ENCODE measurements at regions of chr3 and their contacts with region 1.

Region 1: DNA sequence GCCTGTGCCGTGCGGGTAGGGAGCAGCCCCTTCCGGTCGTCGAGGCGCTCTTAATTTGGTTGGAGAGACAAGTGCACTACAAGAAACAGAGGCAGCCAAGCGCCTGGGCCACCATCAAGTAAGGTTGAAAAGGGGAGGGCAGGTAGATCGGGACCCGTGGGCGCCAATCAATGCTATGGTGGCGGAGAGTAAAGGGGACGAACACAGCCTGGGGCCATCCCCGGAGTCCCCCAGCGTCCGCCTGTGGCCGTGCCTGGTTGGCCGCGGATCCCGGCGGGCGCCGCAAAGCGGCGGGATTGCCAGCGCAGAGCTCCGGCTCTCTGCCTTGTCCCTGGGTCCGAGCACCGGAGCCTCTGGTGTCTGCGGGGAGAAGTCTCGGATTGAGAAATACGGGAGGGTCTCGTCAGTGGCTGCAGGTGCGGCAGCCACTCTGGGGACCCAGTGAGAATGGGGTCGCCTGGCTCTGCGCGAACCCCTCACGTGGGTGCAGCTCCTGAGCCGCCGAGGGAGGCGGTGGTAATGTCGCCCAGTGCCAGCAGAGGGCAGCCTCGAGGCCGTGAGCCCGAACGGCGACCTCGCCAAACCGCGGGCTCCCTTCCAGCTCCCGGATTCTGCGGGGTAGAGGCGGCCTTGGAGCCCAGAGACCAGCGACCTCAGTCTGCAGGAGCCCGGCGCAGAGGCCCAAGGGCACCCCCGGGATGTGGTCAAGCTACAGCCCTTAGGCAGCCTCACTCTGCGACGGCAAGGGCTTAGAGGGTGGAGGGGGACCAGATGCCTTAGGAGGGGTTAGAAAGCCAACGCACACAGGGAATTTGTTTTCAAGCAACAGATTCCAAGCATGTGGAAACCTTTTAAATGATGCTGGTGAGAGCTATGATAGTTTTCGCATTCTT is 10.8 kb downstream of the FOXL2 start:
- DNase-seq: peak; percentile 71 to 83
- ATAC-seq: peak; percentile 69 to 85 (median 78)
- H3K4me3 ChIP-seq: peak overlapping the region in 9 of 10 donors; percentile 12 to 44 (median 41)
- H3K27ac ChIP-seq: no peak overlapping the region
- H3K4me1 ChIP-seq: peaks cover 17 to 47% (median 44%) of the 10 kb centered on the region in 9 donors
- H3K27me3 ChIP-seq: peaks cover 38 to 71% (median 60%) of the 10 kb centered on the region in 7 donors
- CTCF ChIP-seq: peak; percentile 86 to 98 (median 95)

Region 2: GRCh38 chr3:138974462-138974861 is 38.4 kb after region 1 on chr3:
- intact Hi-C with region 1: loop called in 1 of 10 experiments (anchors 2 kb)
- DNase-seq: no peak
- ATAC-seq: no peak
- H3K4me3 ChIP-seq: no peak overlapping the region
- H3K27ac ChIP-seq: no peak overlapping the region
- H3K4me1 ChIP-seq: no peaks in the 10 kb centered on the region
- H3K27me3 ChIP-seq: peaks cover 0 to 27% (median 16%) of the 10 kb centered on the region in 7 donors
- CTCF ChIP-seq: no peak

Region 3: DNA sequence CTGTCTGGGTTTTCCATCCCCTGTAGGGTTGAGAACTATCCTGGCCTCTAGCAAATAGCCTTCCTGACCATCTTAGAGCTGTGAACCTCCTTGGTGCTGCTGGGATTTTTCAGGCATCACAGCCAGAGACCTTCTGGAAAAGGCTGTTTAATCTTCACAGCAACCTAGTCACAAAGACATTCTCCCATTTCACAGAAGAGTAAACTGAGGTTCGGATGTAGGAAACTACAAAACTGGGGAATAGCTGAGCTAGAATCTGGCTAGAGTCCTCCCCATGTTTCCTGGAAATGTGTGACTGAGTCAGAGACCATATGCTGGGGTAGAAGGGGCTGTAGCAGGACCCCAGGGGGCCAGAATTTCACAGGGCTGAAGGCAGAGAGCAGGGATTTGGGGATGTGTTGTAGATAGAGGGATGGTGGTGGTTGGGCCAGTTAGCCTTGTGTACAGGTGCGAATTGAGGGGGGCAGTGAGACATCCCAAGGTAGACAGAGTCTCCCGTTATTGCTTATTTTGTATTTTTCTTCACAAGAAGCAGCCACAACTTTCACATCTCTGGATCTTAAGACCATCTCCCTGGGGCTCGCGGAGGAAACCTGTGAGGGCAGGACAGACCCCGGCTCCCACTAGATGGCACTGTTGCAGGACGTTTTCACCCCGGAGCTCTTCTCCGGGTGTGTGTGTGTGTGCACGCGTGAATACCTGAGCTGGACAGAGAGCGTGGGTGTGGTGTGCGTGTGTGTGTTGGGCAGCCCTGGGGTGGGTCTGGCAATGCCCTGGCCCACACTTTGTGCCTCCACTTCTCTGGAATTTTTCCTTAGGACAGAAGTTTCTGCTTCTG is 175.5 kb after region 1 on chr3:
- intact Hi-C with region 1: loop called in 1 of 10 experiments (anchors 10 kb)
- DNase-seq: peak; percentile 47 to 53
- ATAC-seq: peak; percentile 35 to 87 (median 79)
- H3K4me3 ChIP-seq: no peak overlapping the region
- H3K27ac ChIP-seq: no peak overlapping the region
- H3K4me1 ChIP-seq: no peaks in the 10 kb centered on the region
- H3K27me3 ChIP-seq: peaks cover 0 to 12% (median 8%) of the 10 kb centered on the region in 7 donors
- CTCF ChIP-seq: peak; percentile 48 to 83 (median 70)

Region 4: GRCh38 chr3:139559541-139559940 is 623.4 kb after region 1 on chr3:
- intact Hi-C with region 1: no loop called
- DNase-seq: no peak
- ATAC-seq: no peak
- H3K4me3 ChIP-seq: no peak overlapping the region
- H3K27ac ChIP-seq: no peak overlapping the region
- H3K4me1 ChIP-seq: peaks cover 0 to 5% (median 0%) of the 10 kb centered on the region in 9 donors
- H3K27me3 ChIP-seq: no peaks in the 10 kb centered on the region
- CTCF ChIP-seq: no peak